H1 (cell line): ENCODE measurements at regions of chr3 and their contacts with region 1.

Region 1: DNA sequence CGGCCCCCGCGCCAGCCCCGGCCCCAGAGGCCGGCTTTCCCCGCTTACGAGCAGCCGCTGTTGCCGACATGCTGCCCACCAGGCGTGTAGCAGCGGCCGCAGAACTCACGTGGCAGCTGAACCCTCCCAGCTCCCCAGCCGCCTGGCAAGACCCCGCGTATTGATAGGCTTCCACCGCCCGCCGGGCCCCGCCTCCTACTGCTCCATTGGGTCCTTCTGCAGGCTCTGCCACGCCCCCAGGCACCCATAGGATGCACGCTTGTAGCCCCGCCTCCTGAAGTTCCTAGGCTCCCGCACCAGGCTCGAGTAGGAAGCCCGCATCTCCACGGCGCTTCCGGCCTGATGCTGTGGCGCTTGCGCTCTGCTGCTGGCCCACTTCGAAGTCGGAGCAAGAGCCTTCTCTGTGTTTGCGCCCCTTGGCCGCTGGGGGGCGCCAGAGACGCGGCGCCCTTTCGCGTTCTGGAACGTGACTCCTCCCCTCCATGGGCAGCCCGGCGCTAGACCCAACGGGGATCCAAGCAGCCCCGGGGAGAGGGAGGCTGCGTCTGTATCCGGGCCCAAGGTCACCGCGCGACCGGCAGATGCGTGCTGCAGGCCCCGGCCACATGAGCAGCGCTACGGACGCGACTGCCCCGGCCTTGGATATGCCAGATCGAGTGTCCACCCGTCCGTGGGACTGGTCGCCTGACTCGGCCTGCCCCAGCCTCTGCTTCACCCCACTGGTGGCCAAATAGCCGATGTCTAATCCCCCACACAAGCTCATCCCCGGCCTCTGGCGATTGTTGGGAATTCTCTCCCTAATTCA is at the starts of genes PARP3 and RRP9:
- DNase-seq: peak; percentile 99 to 100
- H3K4me3 ChIP-seq: peak within 1 kb of the TSS; percentile 50 to 88 (median 82)
- H3K27ac ChIP-seq: no peak within 1 kb of the TSS
- H3K4me1 ChIP-seq: peaks cover 2 to 13% (median 6%) of the 10 kb centered on the region in 4 experiments
- H3K27me3 ChIP-seq: peaks cover 0 to 10% (median 4%) of the 10 kb centered on the region in 4 experiments; a peak in 4 of 7 replicates
- CTCF ChIP-seq: peak in 2 of 3 experiments; percentile 97; a peak in 3 of 4 replicates
- EP300 ChIP-seq: no peak
- POLR2A ChIP-seq: peak in 1 of 2 experiments; percentile 71; a peak in 1 of 3 replicates
- RAD21 ChIP-seq: peak; percentile 84 to 90
- total RNA-seq, gene PARP3: 1.1 and 1.3 TPM in 2 replicates
- total RNA-seq, gene RRP9: 55.6 TPM in 2 replicates

Region 2: GRCh38 chr3:51605938-51606337 is 336.1 kb before region 1 on chr3:
- CTCF ChIA-PET with region 1: no interaction called
- POLR2A ChIA-PET with region 1: no interaction called
- DNase-seq: no peak
- H3K4me3 ChIP-seq: no peak overlapping the region
- H3K27ac ChIP-seq: no peak overlapping the region
- H3K4me1 ChIP-seq: no peaks in the 10 kb centered on the region
- H3K27me3 ChIP-seq: no peaks in the 10 kb centered on the region
- CTCF ChIP-seq: no peak
- EP300 ChIP-seq: no peak
- POLR2A ChIP-seq: no peak
- RAD21 ChIP-seq: no peak

Region 3: DNA sequence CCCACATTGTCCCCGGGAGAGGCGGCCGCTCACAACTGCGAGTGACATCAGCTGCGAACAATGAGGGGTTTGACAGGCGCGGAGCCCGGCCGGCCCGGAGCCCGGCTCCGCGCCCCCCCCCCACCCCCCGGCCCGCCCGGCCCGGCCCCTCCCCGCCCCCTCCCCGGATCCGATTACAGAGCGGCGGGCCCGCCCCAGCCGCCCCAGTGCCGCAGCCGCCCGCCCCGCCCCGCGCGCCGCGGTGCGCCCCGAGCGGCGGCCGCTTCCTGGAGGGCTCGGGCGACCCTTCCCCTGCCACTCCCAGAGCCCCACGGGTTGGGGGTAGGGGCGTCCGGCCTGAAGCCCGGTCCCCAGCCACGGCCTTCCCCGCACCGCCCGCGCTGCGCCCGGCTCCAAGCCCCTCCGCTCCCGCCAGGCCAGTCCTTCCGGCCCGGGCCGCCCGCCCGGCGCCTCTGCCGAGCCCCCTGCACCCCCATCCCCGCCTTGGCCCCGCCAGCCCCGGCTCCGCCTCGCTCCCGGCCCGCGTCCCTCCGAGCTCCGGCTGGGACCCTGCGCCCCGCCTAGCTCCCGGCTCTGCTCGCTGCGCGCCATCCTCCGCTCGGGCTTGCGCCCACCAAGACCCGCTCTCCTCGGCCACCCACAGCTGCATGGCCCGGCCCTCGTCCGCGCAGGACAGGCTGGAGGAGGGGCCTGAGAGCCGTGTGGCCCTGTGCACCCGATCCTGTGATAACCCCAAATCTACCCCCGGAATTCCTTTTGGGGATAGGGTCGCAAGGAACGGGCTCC is 25.6 kb after region 1 on chr3 and contains the start of gene PCBP4:
- CTCF ChIA-PET with region 1: interaction called, 44 read pairs
- POLR2A ChIA-PET with region 1: interaction called, 130 read pairs
- DNase-seq: peak in 1 of 2 experiments; percentile 77
- H3K4me3 ChIP-seq: peak within 1 kb of the TSS; percentile 57 to 90 (median 73)
- H3K27ac ChIP-seq: peak within 1 kb of the TSS; percentile 54
- H3K4me1 ChIP-seq: peaks cover 12 to 42% (median 33%) of the 10 kb centered on the region in 4 experiments
- H3K27me3 ChIP-seq: peaks cover 0 to 13% (median 2%) of the 10 kb centered on the region in 4 experiments; a peak in 5 of 7 replicates
- CTCF ChIP-seq: no peak
- EP300 ChIP-seq: no peak
- POLR2A ChIP-seq: no peak
- RAD21 ChIP-seq: no peak
- total RNA-seq, gene PCBP4: 16.4 and 19.6 TPM in 2 replicates

Region 4: DNA sequence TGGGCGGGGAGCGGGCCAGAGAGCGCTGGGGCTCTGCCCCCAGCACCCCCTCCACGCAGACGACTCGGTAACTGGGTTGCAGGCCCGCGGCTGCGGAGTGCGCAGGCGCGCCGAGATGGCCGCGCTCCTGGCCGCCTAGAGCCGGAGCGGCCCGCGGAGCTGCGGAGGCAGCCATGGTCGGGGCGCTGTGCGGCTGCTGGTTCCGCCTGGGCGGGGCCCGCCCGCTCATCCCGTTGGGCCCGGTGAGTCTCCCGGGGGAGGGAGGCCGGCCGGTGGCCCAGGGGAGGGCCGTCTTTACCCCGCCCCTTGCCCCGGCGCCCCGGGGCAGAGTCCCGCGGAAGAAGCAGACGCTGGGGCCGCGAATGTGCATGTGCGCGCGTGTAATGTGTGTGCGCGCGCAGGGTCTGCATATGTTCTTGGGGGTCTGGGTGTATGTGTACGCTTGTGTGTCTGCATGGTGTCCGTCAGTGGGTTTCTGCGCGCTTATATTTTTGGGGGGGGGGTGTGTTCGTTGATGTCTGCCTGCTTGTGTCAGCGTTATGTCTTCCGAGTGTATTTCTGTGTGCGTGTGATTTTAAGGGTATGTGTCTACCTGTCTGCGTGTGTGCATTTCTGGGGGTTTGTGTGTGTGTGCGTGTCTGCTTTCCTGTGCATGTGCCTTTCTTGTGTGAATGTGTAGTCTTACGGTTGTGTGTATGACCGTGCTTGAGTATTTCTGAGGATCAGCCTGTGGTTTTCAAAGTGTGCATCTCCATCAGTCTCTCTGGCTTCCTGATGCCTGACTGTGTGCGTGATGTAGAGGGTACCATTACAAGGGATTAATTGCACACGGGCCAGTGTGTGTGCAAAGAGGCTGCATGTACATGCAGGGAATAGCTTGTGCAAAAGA is 33.2 kb after region 1 on chr3 and contains the start of gene ABHD14A:
- CTCF ChIA-PET with region 1: interaction called, 25 read pairs
- POLR2A ChIA-PET with region 1: interaction called, 130 read pairs
- DNase-seq: peak in 1 of 2 experiments; percentile 82
- H3K4me3 ChIP-seq: peak within 1 kb of the TSS; percentile 34 to 64 (median 48)
- H3K27ac ChIP-seq: no peak within 1 kb of the TSS
- H3K4me1 ChIP-seq: peaks cover 6 to 21% (median 15%) of the 10 kb centered on the region in 4 experiments
- H3K27me3 ChIP-seq: peaks cover 2 to 32% (median 24%) of the 10 kb centered on the region in 4 experiments; a peak in 6 of 7 replicates
- CTCF ChIP-seq: no peak
- EP300 ChIP-seq: no peak
- POLR2A ChIP-seq: peak in 1 of 2 experiments; percentile 49; a peak in 1 of 3 replicates
- RAD21 ChIP-seq: no peak
- total RNA-seq, gene ABHD14A: 1.8 and 4.6 TPM in 2 replicates

Region 5: DNA sequence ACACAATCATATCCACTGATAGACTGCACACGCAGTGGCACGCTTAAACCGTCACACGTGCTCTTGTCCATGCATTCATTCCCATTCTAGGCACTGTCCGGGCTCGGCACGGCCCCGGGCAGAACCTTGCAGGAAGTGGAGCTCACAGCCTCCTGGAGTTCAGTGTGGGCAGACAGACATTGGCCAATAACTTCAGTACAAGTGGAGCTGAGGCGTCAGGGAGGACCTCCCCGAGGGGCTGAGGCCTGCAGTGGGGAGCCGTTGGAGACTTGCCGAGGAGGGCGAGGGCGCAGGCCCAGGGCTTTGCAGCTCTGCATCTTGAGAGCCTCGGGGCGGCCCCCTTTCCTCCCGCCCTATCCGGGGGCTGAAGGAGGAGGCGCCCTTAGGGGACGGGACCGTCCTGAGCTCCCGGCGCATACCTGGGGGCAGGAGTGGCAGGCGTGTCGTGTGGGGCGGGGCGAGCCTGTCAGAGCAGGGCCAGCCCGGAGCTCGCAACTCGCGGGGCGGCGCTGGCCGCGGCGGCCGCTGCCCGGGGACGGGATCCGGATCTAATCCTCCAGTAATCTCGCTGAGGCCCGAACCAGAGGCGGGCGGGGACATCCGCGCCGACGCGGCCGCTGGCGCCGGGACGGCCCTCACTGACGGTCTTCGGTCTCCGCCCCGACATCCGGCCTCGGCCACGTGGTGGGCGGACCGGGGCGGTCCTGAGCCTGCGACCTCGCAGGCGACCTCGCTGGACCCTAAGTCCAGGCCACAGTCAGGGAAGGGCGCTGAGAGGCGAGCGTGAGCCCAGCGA is 41.0 kb after region 1 on chr3 and contains the start of gene ACY1:
- CTCF ChIA-PET with region 1: interaction called, 25 read pairs
- POLR2A ChIA-PET with region 1: interaction called, 7 read pairs
- DNase-seq: peak in 1 of 2 experiments; percentile 89
- H3K4me3 ChIP-seq: peak within 1 kb of the TSS; percentile 53 to 63 (median 56)
- H3K27ac ChIP-seq: peak within 1 kb of the TSS; percentile 45; the same call in 1 of the 2 replicates
- H3K4me1 ChIP-seq: peaks cover 0 to 12% (median 9%) of the 10 kb centered on the region in 4 experiments; a peak in 6 of 7 replicates
- H3K27me3 ChIP-seq: no peaks in the 10 kb centered on the region
- CTCF ChIP-seq: no peak
- EP300 ChIP-seq: no peak
- POLR2A ChIP-seq: peak in 1 of 2 experiments; percentile 86; a peak in 2 of 3 replicates
- RAD21 ChIP-seq: no peak
- total RNA-seq, gene ACY1: 45.5 and 48.3 TPM in 2 replicates

Region 6: GRCh38 chr3:52046186-52046913 is 104.3 kb after region 1 on chr3:
- CTCF ChIA-PET with region 1: no interaction called
- POLR2A ChIA-PET with region 1: no interaction called
- DNase-seq: no peak
- H3K4me3 ChIP-seq: no peak overlapping the region
- H3K27ac ChIP-seq: no peak overlapping the region
- H3K4me1 ChIP-seq: peaks cover 0 to 8% (median 3%) of the 10 kb centered on the region in 4 experiments; a peak in 5 of 7 replicates
- H3K27me3 ChIP-seq: no peaks in the 10 kb centered on the region
- CTCF ChIP-seq: no peak
- EP300 ChIP-seq: no peak
- POLR2A ChIP-seq: no peak
- RAD21 ChIP-seq: no peak